Activated CD8-positive, alpha-beta T cell treated with anti-CD3 and anti-CD28 coated beads for 36 hours (primary cell): ENCODE measurements at regions of chr19 and their contacts with region 1.

Region 1: GRCh38 chr19:44723952-44724319 is 24.6 kb upstream of the BCL3 start:
- DNase-seq: peak; percentile 84
- ATAC-seq: peak; percentile 92
- H3K4me3 Mint-ChIP-seq: no peak overlapping the region
- H3K27ac Mint-ChIP-seq: no peak overlapping the region
- H3K4me1 Mint-ChIP-seq: peaks cover 44% of the 10 kb centered on the region
- H3K27me3 Mint-ChIP-seq: no peaks in the 10 kb centered on the region
- CTCF ChIP-seq: peak; percentile 95

Region 2: GRCh38 chr19:44712864-44713515 is 10.9 kb before region 1 on chr19:
- CTCF ChIA-PET with region 1: interaction called, 38 read pairs
- POLR2A ChIA-PET with region 1: no interaction called
- intact Hi-C with region 1: no loop called
- DNase-seq: no peak
- ATAC-seq: no peak
- H3K4me3 Mint-ChIP-seq: no peak overlapping the region
- H3K27ac Mint-ChIP-seq: no peak overlapping the region
- H3K4me1 Mint-ChIP-seq: peaks cover 5% of the 10 kb centered on the region
- H3K27me3 Mint-ChIP-seq: no peaks in the 10 kb centered on the region
- CTCF ChIP-seq: no peak

Region 3: DNA sequence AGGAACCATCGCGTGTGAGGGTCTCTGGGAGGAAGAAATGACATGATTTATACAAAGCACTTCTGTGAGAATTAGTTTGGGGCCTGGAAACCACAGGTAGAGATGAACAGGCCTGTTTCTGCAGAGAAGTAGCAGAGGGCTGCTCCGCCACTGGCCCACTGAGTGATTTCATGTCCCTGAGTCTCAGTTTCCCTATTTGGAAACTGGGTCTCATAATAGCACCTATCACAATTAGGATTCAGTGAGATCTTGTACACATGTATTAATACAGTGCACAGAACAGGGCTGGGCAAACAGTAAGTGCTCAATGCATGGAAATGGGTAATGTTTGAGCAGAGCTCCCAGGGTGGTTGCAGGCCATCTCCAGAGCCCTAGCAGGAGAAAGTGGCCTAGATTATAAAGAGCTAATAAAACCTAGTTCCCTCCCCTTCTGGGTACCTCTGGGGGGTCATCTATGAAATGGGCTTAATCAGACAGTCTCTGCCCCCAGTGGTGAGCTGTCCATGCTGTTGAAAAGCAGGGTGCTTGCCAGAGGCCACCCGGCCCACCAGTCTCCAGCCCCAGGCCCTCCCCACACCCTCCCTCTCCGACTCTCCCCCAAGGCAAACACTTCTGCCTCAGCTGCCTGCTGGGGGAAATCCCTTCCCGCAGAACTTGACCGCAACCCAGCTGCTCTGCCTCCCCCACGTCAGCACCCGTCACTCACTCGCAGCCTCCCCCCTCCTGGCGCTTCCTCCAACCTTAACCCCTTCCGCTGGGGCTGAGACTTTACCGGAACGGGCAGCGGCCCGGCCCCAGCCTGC is 29.1 kb after region 1 on chr19:
- CTCF ChIA-PET with region 1: interaction called, 26 read pairs
- POLR2A ChIA-PET with region 1: interaction called, 3 read pairs
- intact Hi-C with region 1: no loop called
- DNase-seq: peak; percentile 97
- ATAC-seq: peak; percentile 85
- H3K4me3 Mint-ChIP-seq: peak overlapping the region; percentile 91
- H3K27ac Mint-ChIP-seq: peak overlapping the region; percentile 98
- H3K4me1 Mint-ChIP-seq: peaks cover 51% of the 10 kb centered on the region
- H3K27me3 Mint-ChIP-seq: no peaks in the 10 kb centered on the region
- CTCF ChIP-seq: no peak

Region 4: DNA sequence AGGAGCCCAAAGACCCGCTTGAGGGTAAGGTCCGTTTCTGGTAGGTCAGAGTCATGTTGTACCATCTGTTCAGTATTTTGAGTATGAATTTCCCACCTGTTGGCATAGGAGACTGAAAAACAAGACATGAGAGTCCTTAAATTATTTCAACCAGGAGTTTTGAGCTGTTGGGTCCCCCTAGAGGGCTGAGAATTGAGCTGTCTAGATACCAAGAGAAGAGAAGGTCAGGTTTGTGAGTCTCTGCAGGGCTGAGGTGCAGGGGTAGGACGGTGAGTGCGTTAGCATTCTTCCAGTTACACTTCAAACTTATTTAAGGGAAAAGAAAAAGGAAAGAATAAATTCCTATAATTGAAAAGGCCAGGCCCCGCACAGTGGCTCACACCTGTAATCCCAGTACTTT is 58.8 kb after region 1 on chr19:
- CTCF ChIA-PET with region 1: interaction called, 38 read pairs
- POLR2A ChIA-PET with region 1: no interaction called
- intact Hi-C with region 1: no loop called
- DNase-seq: no peak
- ATAC-seq: no peak
- H3K4me3 Mint-ChIP-seq: no peak overlapping the region
- H3K27ac Mint-ChIP-seq: no peak overlapping the region
- H3K4me1 Mint-ChIP-seq: peaks cover 4% of the 10 kb centered on the region
- H3K27me3 Mint-ChIP-seq: peaks cover 4% of the 10 kb centered on the region
- CTCF ChIP-seq: no peak

Region 5: DNA sequence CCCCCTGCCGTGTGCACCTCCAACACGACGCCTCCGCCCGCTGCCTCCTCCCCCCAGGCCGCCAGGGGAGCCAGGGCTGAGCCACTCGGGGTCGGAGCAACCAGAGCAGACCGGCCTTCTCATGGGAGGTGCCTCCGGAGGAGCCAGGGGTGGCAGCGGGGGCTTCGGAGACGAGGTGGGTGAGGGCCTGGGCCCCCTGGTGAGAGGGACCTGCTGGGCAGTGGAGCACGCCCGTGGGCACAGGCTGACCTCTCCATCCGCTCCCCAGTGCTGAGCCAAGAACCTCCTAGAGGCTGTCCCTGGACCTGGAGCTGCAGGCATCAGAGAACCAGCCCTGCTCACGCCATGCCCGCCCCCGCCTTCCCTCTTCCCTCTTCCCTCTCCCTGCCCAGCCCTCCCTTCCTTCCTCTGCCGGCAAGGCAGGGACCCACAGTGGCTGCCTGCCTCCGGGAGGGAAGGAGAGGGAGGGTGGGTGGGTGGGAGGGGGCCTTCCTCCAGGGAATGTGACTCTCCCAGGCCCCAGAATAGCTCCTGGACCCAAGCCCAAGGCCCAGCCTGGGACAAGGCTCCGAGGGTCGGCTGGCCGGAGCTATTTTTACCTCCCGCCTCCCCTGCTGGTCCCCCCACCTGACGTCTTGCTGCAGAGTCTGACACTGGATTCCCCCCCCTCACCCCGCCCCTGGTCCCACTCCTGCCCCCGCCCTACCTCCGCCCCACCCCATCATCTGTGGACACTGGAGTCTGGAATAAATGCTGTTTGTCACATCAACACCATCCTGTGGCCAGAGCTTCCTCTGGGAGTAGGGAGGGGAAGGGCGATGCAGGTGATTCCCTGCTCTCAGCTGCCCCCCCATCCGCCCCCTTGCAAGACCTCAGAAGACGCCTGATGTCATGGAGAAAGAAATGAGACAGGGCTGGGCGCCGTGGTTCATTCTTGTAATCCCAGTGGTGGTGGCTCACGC is 97.0 kb after region 1 on chr19:
- CTCF ChIA-PET with region 1: no interaction called
- POLR2A ChIA-PET with region 1: no interaction called
- intact Hi-C with region 1: no loop called
- DNase-seq: no peak
- ATAC-seq: no peak
- H3K4me3 Mint-ChIP-seq: no peak overlapping the region
- H3K27ac Mint-ChIP-seq: no peak overlapping the region
- H3K4me1 Mint-ChIP-seq: no peaks in the 10 kb centered on the region
- H3K27me3 Mint-ChIP-seq: no peaks in the 10 kb centered on the region
- CTCF ChIP-seq: no peak